AG04449 (cell line): ENCODE measurements at regions of chr2 and their contacts with region 1.

Region 1: GRCh38 chr2:20635675-20636584 is 15.0 kb downstream of the HS1BP3 start:
- DNase-seq: no peak
- H3K4me3 ChIP-seq: no peak overlapping the region; the same call in 1 of the 2 replicates
- CTCF ChIP-seq: peak; percentile 99

Region 2: DNA sequence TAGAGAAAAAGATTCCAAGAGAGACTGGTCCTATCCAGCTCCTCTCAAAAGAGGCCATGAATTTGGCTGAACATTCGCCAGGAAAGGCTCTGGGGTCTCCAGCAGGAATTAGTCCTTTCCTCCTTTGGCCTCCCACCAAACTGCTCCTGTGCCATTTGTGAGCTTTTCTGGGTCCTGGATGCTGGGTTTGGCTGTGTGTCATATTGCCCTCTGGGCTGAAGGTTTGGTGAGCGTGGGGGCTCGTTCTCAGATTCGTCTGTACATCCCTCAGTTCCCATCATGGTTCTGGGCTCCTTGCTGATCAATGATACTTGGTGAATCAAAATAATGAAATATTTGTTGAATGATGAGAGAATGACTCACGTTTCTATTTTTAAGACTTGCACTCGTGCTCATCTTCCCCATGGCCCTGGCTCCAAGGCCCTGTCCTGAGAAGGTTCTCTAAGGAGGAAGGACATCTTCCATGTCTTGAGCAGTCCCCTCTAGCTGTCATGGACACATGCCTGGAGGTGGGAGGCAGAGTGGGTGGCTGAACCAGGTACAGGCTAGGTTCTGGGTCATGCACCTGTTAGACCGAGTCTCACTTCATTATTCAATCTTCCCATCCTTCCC is 236.9 kb before region 1 on chr2:
- CTCF ChIA-PET with region 1: interaction called, 79 read pairs
- POLR2A ChIA-PET with region 1: no interaction called
- DNase-seq: no peak
- H3K4me3 ChIP-seq: no peak overlapping the region
- CTCF ChIP-seq: no peak

Region 3: GRCh38 chr2:20424300-20425290 is 211.3 kb before region 1 on chr2:
- CTCF ChIA-PET with region 1: interaction called, 83 read pairs
- POLR2A ChIA-PET with region 1: no interaction called
- DNase-seq: no peak
- H3K4me3 ChIP-seq: no peak overlapping the region
- CTCF ChIP-seq: no peak

Region 4: GRCh38 chr2:20471902-20472581 is 163.9 kb before region 1 on chr2:
- CTCF ChIA-PET with region 1: no interaction called
- POLR2A ChIA-PET with region 1: no interaction called
- DNase-seq: no peak
- H3K4me3 ChIP-seq: no peak overlapping the region
- CTCF ChIP-seq: no peak

Region 5: DNA sequence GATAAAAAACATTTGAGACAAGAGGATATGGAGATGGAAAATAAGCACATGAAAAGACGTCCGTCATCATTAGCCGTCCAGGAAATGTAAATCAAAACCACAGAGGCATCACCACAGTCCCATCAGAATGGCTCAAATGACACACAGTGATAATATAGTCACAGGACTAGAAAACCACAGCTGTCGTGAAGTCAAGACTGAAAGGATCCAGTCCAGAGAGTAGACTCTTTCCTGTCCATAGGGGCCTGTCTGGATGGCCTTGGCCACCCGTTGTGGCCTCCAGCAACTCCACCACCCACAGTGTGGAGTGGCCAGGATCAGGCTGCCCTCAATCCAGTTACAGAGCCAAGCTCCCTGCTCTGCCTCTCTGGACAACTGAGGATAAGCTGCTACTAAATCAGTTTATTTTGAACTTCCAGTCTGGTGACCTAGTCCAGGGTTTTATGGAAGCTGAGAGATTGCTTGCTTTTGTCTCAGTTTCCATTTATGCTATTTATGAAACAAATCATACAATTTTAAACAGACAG is 128.7 kb before region 1 on chr2:
- CTCF ChIA-PET with region 1: interaction called, 17 read pairs
- POLR2A ChIA-PET with region 1: no interaction called
- DNase-seq: no peak
- H3K4me3 ChIP-seq: no peak overlapping the region
- CTCF ChIP-seq: no peak

Region 6: GRCh38 chr2:20611077-20611843 is 24.7 kb before region 1 on chr2:
- CTCF ChIA-PET with region 1: interaction called, 12 read pairs
- POLR2A ChIA-PET with region 1: no interaction called
- DNase-seq: no peak
- H3K4me3 ChIP-seq: no peak overlapping the region
- CTCF ChIP-seq: no peak

Region 7: GRCh38 chr2:20625491-20626391 is 10.2 kb before region 1 on chr2:
- CTCF ChIA-PET with region 1: interaction called, 25 read pairs
- POLR2A ChIA-PET with region 1: no interaction called
- DNase-seq: no peak
- H3K4me3 ChIP-seq: no peak overlapping the region
- CTCF ChIP-seq: no peak